ENCODE measurements at regions of chr11 and their contacts with region 1.

Region 1: GRCh38 chr11:69296890-69297786 is 3.2 kb downstream of the MYEOV start:
- DNase-seq: peak; percentile 97
- ATAC-seq: peak; percentile 88

Region 2: GRCh38 chr11:69443138-69443967 is 146.2 kb after region 1 on chr11:
- intact Hi-C with region 1: loop called (anchors 10 kb)
- DNase-seq: peak; percentile 95
- ATAC-seq: peak; percentile 96

Region 3: GRCh38 chr11:69817265-69818230 is 520.4 kb after region 1 on chr11:
- intact Hi-C with region 1: no loop called
- DNase-seq: no peak
- ATAC-seq: peak; percentile 46

Measured in Right ventricle myocardium superior (tissue), 1 donor.